ENCODE measurements at regions of chr16 and their contacts with region 1.

Region 1: GRCh38 chr16:26252598-26252997 is 560.8 kb downstream of the HS3ST4 start:
- DNase-seq: no peak
- ATAC-seq: no peak
- H3K4me3 ChIP-seq: no peak overlapping the region
- H3K27ac ChIP-seq: no peak overlapping the region
- H3K4me1 ChIP-seq: no peaks in the 10 kb centered on the region
- H3K27me3 ChIP-seq: no peaks in the 10 kb centered on the region
- CTCF ChIP-seq: no peak
- POLR2A ChIP-seq: no peak

Region 2: GRCh38 chr16:26316683-26317464 is 64.3 kb after region 1 on chr16:
- in situ Hi-C with region 1: loop called in 1 of 4 experiments (anchors 10 kb)
- intact Hi-C with region 1: no loop called
- DNase-seq: no peak
- ATAC-seq: no peak
- H3K4me3 ChIP-seq: no peak overlapping the region
- H3K27ac ChIP-seq: no peak overlapping the region
- H3K4me1 ChIP-seq: no peaks in the 10 kb centered on the region
- H3K27me3 ChIP-seq: no peaks in the 10 kb centered on the region
- CTCF ChIP-seq: no peak
- POLR2A ChIP-seq: no peak